ENCODE measurements at regions of chr2 and their contacts with region 1.

Region 1: DNA sequence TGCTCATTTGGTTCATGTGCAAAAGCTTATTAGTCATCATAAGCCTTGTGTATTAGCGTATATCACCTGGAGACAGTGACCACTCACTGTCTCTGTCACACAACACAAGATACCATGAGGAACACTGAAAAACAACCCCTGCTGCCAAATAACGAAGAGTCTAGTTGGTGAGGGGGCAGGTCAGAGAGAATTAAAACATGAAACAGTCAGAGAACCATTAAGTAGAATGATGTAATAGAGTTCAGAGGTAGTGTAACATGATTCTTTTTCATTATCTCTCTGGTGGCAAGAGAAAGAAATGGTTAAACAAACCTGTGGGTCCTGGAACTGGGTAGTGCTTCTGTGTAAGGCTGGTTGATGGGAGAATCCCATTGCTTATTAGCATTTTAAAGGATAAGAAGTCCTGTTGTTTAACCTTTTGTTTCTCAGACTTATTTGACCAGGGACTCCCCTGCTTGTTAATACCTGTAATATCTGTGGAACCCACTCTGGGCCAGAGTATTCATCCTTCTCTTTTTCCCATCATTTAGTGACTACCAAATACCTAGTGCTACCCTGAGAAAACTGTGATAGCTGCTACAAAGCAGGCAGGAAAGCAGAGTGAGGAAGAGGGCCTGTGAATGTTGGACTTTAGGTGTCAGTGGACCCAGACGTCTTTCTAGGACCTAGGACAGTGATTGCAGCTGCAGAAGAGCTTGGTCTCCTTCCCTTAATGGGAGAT is 38.0 kb downstream of the PTRHD1 start:
- DNase-seq: no peak
- H3K4me3 Mint-ChIP-seq: no peak overlapping the region
- H3K27ac Mint-ChIP-seq: no peak overlapping the region
- H3K4me1 Mint-ChIP-seq: no peaks in the 10 kb centered on the region
- H3K27me3 Mint-ChIP-seq: no peaks in the 10 kb centered on the region
- CTCF ChIP-seq: no peak

Region 2: DNA sequence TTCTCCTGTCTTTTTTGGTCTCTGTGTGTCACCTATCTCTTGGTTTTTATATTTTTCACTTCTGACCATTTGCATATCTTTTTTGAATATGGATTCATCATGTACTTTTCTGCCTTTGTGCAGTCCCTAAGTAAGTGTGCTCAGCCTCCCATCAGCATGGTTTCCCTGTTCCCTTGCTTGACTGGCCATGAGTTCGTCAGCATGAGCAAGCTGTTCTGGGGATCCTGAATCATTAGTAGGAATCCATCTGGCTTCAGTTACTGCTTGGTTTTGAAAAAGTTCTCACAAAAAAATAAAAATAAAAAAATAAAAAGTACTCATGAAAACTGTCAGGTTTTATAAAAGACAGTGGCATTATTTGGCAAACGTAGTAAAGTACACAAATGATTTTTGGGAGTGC is 120.0 kb before region 1 on chr2:
- CTCF ChIA-PET with region 1: interaction called, 10 read pairs
- intact Hi-C with region 1: no loop called
- DNase-seq: no peak
- H3K4me3 Mint-ChIP-seq: no peak overlapping the region
- H3K27ac Mint-ChIP-seq: no peak overlapping the region
- H3K4me1 Mint-ChIP-seq: no peaks in the 10 kb centered on the region
- H3K27me3 Mint-ChIP-seq: no peaks in the 10 kb centered on the region
- CTCF ChIP-seq: no peak